Activated naive CD8-positive, alpha-beta T cell treated with anti-CD3 and anti-CD28 coated beads, Interleukin-2, amount 10 ng/mL, durations not matched to agents 7 days and 5 days (primary cell): ENCODE measurements at regions of chr14 and their contacts with region 1.

Region 1: GRCh38 chr14:101809671-101810514 is 48.4 kb downstream of the PPP2R5C start:
- DNase-seq: peak; percentile 77
- ATAC-seq: peak; percentile 90
- H3K4me3 Mint-ChIP-seq: peak overlapping the region; percentile 86
- H3K27ac Mint-ChIP-seq: peak overlapping the region; percentile 95
- H3K4me1 Mint-ChIP-seq: peaks cover 36% of the 10 kb centered on the region
- H3K27me3 Mint-ChIP-seq: no peaks in the 10 kb centered on the region

Region 2: DNA sequence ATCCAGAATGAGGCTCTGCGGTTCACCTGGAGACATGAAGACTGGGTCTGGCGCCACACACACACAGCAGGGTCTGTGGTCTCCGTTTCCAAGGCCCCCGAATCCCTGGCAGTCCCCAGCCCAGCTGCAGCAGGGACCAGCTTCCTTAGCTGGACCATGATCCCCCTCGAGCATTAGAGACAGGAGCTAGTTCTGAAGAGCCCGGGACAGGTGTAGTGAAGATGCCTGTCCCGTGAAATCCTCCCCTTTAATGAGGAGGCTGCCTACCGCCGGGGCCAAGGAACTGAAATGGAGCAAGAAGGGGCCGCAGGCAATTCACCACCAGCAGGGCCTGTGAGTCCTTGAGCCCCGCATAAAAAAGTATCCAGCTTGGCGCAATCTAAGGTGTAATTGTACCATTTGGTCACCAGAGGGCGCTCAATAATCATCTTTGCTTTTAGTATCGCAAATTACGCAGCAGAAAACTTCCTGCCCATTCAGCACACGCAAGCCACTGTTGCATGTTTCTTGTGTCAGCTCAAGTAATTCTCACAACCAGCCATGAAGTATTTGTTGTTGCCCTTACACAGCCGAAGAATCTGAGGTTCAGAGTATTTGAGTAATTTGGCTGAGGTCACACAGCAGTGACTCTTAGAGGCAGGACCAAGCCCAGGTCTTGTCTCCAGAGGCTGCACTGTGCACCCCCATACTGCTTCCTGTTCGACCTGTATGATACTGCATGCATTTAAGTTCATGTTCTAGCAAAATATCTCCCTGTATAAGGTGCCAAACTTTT is 102.6 kb before region 1 on chr14:
- POLR2A ChIA-PET with region 1: interaction called, 14 read pairs
- DNase-seq: peak; percentile 53
- ATAC-seq: peak; percentile 70
- H3K4me3 Mint-ChIP-seq: peak overlapping the region; percentile 63
- H3K27ac Mint-ChIP-seq: peak overlapping the region; percentile 81
- H3K4me1 Mint-ChIP-seq: peaks cover 18% of the 10 kb centered on the region
- H3K27me3 Mint-ChIP-seq: peaks cover 14% of the 10 kb centered on the region

Region 3: DNA sequence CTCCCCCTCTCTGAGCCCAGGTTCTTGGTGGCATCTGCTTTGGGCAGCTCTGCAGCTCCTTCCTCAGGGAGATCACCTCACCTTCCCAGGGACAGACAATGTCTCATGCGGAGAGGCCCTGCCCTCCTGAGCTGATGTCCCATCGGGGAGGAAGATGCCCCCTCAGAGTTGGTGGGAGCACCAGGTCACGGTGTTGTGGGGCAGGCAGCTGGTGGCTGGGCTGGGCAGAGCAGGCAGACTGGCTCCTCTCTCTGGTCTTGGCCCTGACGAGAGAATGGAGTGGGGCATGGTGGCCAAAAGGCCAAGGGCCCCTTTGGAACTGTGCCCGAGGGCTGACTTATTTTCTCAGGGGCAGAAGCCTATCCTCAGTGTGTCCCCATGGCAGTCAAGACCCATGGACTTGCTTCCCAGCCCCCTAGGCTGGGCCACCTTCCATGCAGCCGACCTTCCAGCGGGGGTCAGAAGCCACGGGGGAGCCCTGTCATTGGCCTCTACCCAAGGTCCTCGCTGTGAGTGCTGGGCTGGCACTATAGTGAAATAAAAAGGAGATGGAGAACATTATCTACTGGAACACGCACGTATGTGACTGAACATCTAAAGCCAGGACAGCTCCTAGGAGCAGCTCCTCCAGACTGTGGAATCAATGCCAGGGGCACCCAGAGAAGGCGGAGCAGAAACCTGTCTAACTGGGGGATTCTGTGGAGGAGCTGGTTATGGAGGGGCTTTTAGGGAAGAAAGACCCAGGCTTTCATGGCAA is 26.5 kb before region 1 on chr14:
- POLR2A ChIA-PET with region 1: interaction called, 15 read pairs
- DNase-seq: no peak
- ATAC-seq: no peak
- H3K4me3 Mint-ChIP-seq: peak overlapping the region; percentile 70
- H3K27ac Mint-ChIP-seq: peak overlapping the region; percentile 69
- H3K4me1 Mint-ChIP-seq: peaks cover 6% of the 10 kb centered on the region
- H3K27me3 Mint-ChIP-seq: peaks cover 7% of the 10 kb centered on the region

Region 4: DNA sequence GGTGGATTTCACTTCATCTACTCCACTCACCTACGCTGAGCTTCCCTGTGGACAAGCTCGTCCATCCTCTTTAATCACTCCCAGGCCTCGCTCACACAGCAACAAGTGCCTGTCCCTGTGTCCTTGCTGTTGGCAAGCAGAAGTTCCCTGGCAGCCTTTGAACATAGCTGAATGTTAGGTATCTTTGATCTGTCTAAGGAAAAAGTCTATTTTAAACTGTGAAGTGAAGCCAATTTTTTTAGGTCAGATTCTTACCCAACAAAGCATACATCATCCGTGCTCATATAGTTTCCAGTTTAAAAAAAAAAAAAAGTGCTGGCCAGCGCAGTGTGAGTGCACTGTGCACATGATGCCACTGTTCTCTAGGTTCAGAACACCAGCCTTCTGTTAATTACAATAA is 12.0 kb before region 1 on chr14:
- POLR2A ChIA-PET with region 1: interaction called, 22 read pairs
- DNase-seq: no peak
- ATAC-seq: no peak
- H3K4me3 Mint-ChIP-seq: no peak overlapping the region
- H3K27ac Mint-ChIP-seq: no peak overlapping the region
- H3K4me1 Mint-ChIP-seq: no peaks in the 10 kb centered on the region
- H3K27me3 Mint-ChIP-seq: no peaks in the 10 kb centered on the region

Region 5: DNA sequence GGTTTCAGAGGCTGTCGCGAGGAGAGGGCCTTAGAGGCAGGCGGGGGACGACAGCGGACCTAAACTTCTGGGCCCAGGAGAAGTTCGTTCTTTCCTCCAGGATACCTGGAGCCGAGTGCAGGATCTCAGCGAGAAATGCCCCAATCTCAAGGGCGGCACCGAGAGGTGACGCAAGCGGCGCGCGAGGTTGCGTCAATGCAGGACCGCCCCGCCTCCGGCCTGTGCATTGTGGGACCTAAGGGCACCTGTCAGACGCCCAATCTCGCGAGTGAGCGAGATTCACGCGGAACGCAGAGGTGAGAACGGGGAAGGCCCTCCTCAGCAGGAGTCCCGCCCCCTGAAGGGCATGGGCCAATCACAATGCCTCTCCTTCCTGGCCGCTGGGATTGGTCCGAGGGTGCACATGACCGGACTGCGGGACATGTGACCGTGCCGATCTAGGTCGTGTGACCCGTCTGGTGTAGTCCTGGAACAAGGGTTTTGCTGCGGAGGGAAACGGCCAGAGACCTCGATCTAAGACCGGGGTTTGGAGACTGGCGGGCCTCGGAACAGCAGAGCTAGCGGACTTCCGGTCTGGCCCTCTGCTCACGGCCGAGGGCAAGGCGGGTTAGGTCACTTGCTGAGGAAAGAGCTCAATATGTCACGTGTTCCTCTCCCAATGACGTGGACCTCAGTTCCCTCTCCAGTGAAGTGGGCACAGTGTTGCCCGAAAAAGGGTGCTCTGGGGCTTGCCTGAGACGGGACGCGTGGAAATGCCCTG is 138.2 kb after region 1 on chr14:
- POLR2A ChIA-PET with region 1: interaction called, 11 read pairs
- DNase-seq: peak; percentile 100
- ATAC-seq: peak; percentile 98
- H3K4me3 Mint-ChIP-seq: peak overlapping the region; percentile 90
- H3K27ac Mint-ChIP-seq: peak overlapping the region; percentile 95
- H3K4me1 Mint-ChIP-seq: peaks cover 12% of the 10 kb centered on the region
- H3K27me3 Mint-ChIP-seq: peaks cover 32% of the 10 kb centered on the region